ENCODE measurements at regions of chr1 and their contacts with region 1.

Region 1: DNA sequence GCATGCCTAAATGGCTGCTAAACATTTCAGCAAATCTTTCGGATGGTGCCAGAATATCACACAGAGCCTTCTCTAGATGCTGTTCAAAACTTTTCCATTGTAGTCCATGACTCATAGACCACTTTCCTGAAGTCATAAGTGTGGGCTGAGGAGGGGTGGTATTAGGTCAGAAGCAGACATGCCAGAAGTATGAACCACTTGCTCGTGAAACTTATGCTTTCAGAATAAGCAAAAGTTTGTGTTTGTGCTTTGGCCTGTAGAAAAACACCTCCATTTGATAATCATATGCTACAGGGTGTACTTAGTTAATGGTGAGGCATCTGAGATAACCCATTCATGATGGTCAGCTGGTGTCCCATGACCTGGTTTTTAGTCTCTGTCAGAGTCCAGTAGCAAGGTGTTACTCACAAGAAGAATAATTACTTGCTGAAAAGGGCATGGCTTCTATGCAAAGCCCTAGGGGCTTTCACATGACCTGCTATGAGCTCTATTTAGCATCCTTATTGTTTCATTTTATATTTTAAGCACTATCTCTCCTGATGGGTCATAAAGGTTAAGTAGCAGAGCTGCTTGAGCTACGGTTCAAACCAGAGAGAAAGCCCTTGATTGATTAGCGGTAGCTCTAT is 183.1 kb upstream of the IVNS1ABP start:
- DNase-seq: no peak
- ATAC-seq: no peak
- H3K4me3 ChIP-seq: no peak overlapping the region
- H3K4me3 Mint-ChIP-seq: no peak overlapping the region
- H3K27ac ChIP-seq: no peak overlapping the region
- H3K27ac Mint-ChIP-seq: no peak overlapping the region
- H3K4me1 ChIP-seq: no peaks in the 10 kb centered on the region
- H3K4me1 Mint-ChIP-seq: no peaks in the 10 kb centered on the region
- H3K27me3 ChIP-seq: no peaks in the 10 kb centered on the region
- H3K27me3 Mint-ChIP-seq: no peaks in the 10 kb centered on the region
- CTCF ChIP-seq: no peak

Region 2: DNA sequence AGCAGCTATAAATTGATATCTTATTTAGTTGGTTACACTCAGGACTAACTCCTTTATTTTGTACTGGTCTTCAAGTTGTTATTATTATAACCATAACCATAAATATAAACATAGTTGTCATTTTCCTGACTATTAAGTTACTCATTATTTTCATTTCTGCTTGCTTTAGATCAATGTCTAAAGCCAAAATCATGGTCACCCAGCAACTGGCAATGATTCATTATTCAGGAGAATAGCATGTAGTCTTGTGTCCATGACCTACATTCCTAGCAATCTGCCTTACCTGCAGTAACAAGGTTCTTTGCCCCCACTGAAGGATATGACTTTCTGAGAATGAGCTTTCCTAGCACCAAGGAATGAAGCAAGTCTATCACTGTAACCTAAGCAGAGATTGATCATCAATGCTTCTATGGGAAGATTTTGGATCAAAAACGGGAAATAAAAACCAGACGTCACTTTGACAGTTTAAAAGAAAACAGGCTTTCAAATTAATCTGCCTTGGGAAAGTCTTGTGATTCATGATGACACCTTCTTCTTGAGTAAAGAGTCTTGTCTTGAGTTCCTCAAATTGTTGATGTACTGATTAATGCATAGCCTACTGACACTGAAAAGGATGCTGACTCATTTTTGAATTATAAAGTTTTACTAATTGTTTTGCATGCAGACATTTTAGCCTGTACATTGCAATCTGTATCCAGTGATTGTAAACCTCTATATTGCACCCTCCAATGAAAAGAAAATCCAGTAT is 20.2 kb after region 1 on chr1:
- CTCF ChIA-PET with region 1: no interaction called
- POLR2A ChIA-PET with region 1: no interaction called
- intact Hi-C with region 1: loop called in 1 of 2 experiments (anchors 1 kb)
- DNase-seq: peak in 1 of 9 experiments; percentile 11
- ATAC-seq: no peak
- H3K4me3 ChIP-seq: no peak overlapping the region
- H3K4me3 Mint-ChIP-seq: no peak overlapping the region
- H3K27ac ChIP-seq: no peak overlapping the region
- H3K27ac Mint-ChIP-seq: no peak overlapping the region
- H3K4me1 ChIP-seq: no peaks in the 10 kb centered on the region
- H3K4me1 Mint-ChIP-seq: no peaks in the 10 kb centered on the region
- H3K27me3 ChIP-seq: no peaks in the 10 kb centered on the region
- H3K27me3 Mint-ChIP-seq: no peaks in the 10 kb centered on the region
- CTCF ChIP-seq: no peak